Posterior vena cava (tissue), 2 donors: ENCODE measurements at regions of chr3 and their contacts with region 1.

Region 1: GRCh38 chr3:134373994-134374790 is at the start of gene AMOTL2:
- DNase-seq: peak; percentile 94
- total RNA-seq, gene AMOTL2: 49.9 to 56.5 TPM

Region 2: GRCh38 chr3:133799794-133800585 is 574.2 kb before region 1 on chr3:
- intact Hi-C with region 1: no loop called
- DNase-seq: no peak

Region 3: DNA sequence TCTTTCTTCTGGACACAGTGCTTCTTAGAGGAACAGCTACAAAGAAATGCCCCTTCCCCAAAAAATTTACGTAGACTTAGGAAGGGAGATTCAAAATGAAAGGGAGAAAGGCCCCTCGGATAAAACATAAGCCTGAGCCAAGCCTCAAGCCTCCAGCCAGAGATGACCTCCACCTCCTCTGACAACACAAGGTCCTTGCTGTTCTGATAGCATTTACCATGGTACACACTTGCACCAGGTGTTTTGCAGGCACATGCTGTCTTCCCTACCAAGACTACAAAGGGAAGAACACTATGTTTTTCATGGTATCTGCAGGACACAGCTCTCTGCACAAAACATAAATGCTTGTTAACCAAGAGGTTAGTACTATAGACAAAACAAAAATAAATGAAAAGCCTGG is 151.4 kb before region 1 on chr3:
- intact Hi-C with region 1: no loop called
- DNase-seq: no peak

Region 4: GRCh38 chr3:134312873-134313846 is 61.0 kb before region 1 on chr3:
- intact Hi-C with region 1: loop called (anchors 5 kb)
- DNase-seq: peak; percentile 90

Region 5: DNA sequence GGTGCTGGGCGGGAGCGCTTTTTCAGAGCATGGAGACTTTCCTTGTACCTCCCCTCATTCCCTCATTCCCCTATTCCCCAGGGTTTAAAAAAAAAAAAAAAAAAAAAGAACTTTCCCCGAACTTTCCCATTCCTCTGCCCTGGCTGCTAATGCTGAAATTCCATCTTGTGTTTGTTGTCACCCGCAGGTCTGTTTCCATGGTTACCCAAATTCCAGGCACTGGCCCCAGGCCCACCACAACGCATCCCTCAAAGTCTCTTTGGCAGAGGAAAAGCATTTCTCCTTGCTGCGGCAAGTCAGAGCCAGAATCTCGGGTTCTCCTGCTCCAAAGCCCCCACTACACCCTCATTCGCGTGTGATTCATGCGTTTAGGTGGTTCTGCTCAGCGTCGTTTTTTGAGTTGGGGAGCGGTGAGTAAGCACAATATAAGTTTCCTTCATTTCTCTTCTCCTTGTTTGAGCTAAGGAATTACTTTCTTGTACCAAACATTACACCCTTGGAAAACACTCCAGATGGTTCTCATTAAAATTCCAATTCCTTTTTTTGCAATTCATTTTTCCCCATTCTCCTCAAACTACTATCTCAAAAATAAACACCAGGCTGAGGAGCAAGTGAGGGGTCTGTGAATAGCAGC is 90.0 kb after region 1 on chr3:
- intact Hi-C with region 1: loop called (anchors 5 to 10 kb)
- DNase-seq: peak; percentile 95